ENCODE measurements at regions of chr19 and their contacts with region 1.

Region 1: DNA sequence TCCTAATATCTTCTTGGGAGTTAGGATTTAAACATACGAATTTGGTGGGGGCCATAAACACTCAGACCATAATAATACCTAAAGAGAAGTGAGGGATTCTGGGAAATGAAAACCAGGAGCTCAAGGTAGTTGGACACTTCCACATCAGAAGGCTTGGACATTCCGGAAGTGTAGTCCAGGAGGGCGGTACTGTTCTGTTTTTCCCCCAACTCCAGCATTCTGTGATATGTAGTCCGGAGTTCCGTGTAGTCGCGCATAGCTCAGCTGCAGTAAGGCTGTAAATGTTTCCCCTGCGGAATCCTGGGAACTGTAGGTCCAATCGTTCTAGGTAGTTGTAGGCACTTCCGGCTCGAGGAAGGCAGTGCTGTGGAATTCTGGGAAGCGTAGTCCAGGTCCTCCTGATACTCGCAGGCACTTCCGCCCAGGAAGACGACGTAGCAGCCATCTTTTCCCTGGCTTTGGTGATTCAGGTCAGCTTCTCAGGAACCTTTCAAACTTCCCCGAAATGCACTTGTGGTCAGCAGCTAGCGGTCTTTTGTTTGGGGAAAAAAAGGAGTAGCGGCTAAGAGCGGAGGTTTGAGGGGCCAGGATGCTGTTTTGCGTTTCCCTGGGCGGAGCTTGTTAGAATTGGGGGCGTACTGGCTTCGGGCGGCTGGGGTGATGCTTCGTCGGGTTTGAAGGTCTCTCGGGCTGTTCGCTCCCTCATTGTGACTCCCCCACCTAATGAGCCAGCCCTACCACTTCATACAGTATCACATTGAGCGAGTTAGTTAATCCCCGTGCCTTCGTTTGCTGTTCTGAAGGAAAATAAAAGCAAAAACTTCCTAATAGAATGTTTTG is at the start of gene ZNF226:
- DNase-seq: peak; percentile 89
- ATAC-seq: peak; percentile 95
- H3K4me3 ChIP-seq: peak within 1 kb of the TSS; percentile 72 to 99 (median 88)
- H3K4me3 Mint-ChIP-seq: peak within 1 kb of the TSS; percentile 98
- H3K27ac ChIP-seq: peak within 1 kb of the TSS; percentile 73 to 83
- H3K27ac Mint-ChIP-seq: peak within 1 kb of the TSS; percentile 98
- H3K4me1 ChIP-seq: peaks cover 11 to 16% of the 10 kb centered on the region in 2 donors
- H3K4me1 Mint-ChIP-seq: peaks cover 31% of the 10 kb centered on the region
- H3K27me3 ChIP-seq: no peaks in the 10 kb centered on the region
- H3K27me3 Mint-ChIP-seq: no peaks in the 10 kb centered on the region
- CTCF ChIP-seq: no peak
- total RNA-seq, gene ZNF226: 55.8 and 58.8 TPM in 2 replicates

Region 2: DNA sequence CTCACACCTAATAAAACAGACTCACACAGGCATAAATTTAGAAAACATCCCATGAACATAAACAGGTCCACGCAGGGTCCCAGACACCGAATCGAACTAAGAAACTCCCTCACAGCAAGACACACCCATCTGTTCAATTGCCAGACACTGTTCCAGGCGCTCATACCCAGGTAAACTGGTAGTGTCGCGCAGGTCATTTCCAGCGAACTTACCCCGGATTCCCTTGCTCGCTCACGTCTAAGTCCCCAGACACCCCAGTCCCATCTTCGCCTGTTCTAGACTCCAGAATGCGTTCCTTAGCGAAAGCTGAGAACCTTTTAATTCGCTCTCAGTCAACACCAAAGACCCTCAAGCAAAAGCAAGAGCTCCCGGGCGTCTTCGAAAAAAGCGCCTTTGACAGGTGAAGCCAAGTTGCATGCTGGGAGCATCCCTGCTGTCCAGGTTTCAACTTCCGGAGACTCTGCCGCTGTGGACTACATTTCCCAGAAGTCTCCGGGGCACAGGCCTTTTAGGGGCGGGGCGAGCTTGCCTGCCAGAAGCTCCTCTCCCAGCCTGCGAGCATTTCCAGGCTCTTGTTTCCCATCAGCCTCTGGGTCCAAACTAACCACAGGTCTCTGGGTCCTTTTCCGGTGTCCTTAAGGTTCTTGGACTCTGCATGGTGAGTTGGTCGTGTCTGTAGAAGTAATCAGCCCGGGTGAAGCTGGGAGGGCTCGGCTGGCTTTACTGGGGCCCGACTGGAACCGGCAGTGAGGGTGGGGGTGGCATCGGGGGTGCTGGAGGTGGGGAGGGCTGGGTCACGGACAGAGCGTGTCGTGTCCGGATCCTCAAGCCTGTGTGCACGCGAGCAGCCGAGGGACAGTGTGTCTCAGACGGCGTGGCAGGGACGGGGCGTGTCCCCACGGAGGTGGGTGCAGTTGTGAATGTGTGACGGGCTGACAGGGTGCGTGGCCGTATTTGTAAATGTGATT is 337.8 kb before region 1 on chr19 and contains the start of gene ZNF283:
- CTCF ChIA-PET with region 1: no interaction called
- POLR2A ChIA-PET with region 1: no interaction called
- intact Hi-C with region 1: loop called (anchors 5 kb)
- DNase-seq: peak; percentile 86
- ATAC-seq: peak; percentile 99
- H3K4me3 ChIP-seq: peak within 1 kb of the TSS; percentile 56 to 88 (median 69)
- H3K4me3 Mint-ChIP-seq: peak within 1 kb of the TSS; percentile 92
- H3K27ac ChIP-seq: peak within 1 kb of the TSS in 1 of 2 donors; percentile 23
- H3K27ac Mint-ChIP-seq: peak within 1 kb of the TSS; percentile 50
- H3K4me1 ChIP-seq: peaks cover 9 to 12% of the 10 kb centered on the region in 2 donors
- H3K4me1 Mint-ChIP-seq: peaks cover 17% of the 10 kb centered on the region
- H3K27me3 ChIP-seq: peaks cover 0 to under 1% (median 0%) of the 10 kb centered on the region in 4 experiments
- H3K27me3 Mint-ChIP-seq: peaks cover 11% of the 10 kb centered on the region
- CTCF ChIP-seq: no peak
- total RNA-seq, gene ZNF283: 20.8 and 23.3 TPM in 2 replicates

Region 3: DNA sequence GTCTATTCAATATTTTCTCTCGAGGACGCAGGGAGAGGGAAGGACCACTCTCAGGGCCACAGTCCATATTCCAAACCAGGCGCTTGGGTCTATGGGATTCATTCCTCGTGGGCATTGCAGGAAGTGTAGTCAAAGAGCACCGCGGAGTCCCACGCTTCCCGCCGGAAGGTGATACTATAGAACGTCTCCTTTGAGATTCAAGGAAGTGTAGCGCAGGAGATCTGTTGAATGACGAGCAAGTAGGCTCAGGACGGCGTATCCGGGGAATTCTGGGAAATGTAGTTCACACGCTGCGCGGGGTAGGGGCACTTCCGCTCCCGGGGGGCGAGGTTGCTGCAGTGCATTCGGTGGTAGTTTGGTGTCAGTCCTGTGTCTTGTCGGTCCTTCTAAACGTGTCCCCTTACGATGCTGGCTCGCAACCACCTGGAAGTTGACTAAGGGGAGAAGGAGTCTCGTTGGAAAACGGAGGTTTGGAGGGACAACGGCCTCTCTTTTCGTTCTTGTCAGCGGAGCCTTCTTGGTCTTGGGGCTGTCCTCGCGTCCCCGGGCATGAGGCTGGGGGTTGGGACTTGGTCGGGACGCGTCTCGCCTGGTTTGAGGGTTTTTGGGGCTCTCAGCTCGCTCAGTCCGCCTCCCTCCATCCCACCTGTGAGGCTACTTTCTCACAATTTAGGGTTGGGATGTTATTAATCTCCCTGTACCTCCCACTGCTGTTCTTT is 92.9 kb before region 1 on chr19 and contains the start of gene ZNF284:
- CTCF ChIA-PET with region 1: no interaction called
- POLR2A ChIA-PET with region 1: no interaction called
- intact Hi-C with region 1: loop called (anchors 1 kb)
- DNase-seq: peak; percentile 89
- ATAC-seq: peak; percentile 100
- H3K4me3 ChIP-seq: peak within 1 kb of the TSS; percentile 68 to 89 (median 76)
- H3K4me3 Mint-ChIP-seq: peak within 1 kb of the TSS; percentile 89
- H3K27ac ChIP-seq: peak within 1 kb of the TSS; percentile 32 to 47
- H3K27ac Mint-ChIP-seq: peak within 1 kb of the TSS; percentile 76
- H3K4me1 ChIP-seq: peaks cover 13 to 16% of the 10 kb centered on the region in 2 donors
- H3K4me1 Mint-ChIP-seq: peaks cover 25% of the 10 kb centered on the region
- H3K27me3 ChIP-seq: no peaks in the 10 kb centered on the region
- H3K27me3 Mint-ChIP-seq: no peaks in the 10 kb centered on the region
- CTCF ChIP-seq: no peak
- total RNA-seq, gene ZNF284: 3.3 and 4.9 TPM in 2 replicates

Region 4: GRCh38 chr19:44113138-44113783 is 51.6 kb before region 1 on chr19 and contains the start of gene ZNF225:
- CTCF ChIA-PET with region 1: no interaction called
- POLR2A ChIA-PET with region 1: no interaction called
- intact Hi-C with region 1: loop called (anchors 1 kb)
- DNase-seq: peak; percentile 91
- ATAC-seq: peak; percentile 95
- H3K4me3 ChIP-seq: peak within 1 kb of the TSS; percentile 71 to 98 (median 86)
- H3K4me3 Mint-ChIP-seq: peak within 1 kb of the TSS; percentile 99
- H3K27ac ChIP-seq: peak within 1 kb of the TSS; percentile 45 to 65
- H3K27ac Mint-ChIP-seq: peak within 1 kb of the TSS; percentile 90
- H3K4me1 ChIP-seq: peaks cover 9 to 19% of the 10 kb centered on the region in 2 donors
- H3K4me1 Mint-ChIP-seq: peaks cover 28% of the 10 kb centered on the region
- H3K27me3 ChIP-seq: no peaks in the 10 kb centered on the region
- H3K27me3 Mint-ChIP-seq: no peaks in the 10 kb centered on the region
- CTCF ChIP-seq: no peak
- total RNA-seq, gene ZNF225: 12.1 and 13.1 TPM in 2 replicates

Region 5: GRCh38 chr19:44207126-44207803 is 42.4 kb after region 1 on chr19:
- CTCF ChIA-PET with region 1: interaction called, 3 read pairs
- POLR2A ChIA-PET with region 1: no interaction called
- intact Hi-C with region 1: loop called (anchors 1 kb)
- DNase-seq: peak; percentile 91
- ATAC-seq: peak; percentile 91
- H3K4me3 ChIP-seq: peak overlapping the region; percentile 70 to 93 (median 88)
- H3K4me3 Mint-ChIP-seq: peak overlapping the region; percentile 88
- H3K27ac ChIP-seq: peak overlapping the region; percentile 71 to 86
- H3K27ac Mint-ChIP-seq: peak overlapping the region; percentile 92
- H3K4me1 ChIP-seq: peaks cover 4 to 7% of the 10 kb centered on the region in 2 donors
- H3K4me1 Mint-ChIP-seq: peaks cover 11% of the 10 kb centered on the region
- H3K27me3 ChIP-seq: no peaks in the 10 kb centered on the region
- H3K27me3 Mint-ChIP-seq: peaks cover 13% of the 10 kb centered on the region
- CTCF ChIP-seq: no peak

Region 6: DNA sequence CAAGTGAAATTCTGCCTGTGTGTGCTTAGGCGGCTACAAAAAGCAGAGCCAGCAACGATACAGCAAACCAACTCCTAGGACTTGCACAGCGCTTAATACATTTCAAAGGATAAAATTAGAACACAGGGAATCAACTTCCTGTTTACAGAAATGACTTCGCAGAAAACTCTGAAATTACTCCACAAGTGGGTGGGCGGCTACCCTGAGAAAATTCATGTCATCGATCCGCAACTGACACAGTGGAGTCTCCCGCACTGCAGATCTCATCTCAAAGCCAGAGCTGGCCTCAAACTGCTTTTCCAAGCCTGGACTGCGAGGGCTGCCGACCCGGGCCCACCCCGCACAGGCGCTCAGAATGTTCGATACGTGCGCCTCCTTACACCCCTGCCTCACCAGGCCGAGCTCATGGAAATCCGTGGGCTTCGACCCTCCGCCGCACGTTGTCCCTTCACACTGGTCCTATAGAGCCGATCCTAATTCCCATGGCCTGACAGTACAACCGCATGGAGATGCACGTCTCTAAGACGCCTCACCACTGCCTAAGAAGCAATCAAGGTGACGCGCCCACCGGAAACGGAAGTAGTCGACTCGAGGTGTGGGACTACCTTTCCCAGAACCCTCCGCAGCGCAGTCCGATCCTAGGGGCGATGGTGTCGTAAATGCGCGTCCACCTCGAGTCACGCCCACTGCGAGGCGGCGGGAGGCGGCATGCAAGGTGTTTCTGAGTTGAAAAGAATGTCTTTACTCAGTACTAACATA is 283.2 kb after region 1 on chr19 and contains the start of gene ZNF229:
- CTCF ChIA-PET with region 1: no interaction called
- POLR2A ChIA-PET with region 1: no interaction called
- intact Hi-C with region 1: loop called (anchors 2 kb)
- DNase-seq: peak; percentile 88
- ATAC-seq: peak; percentile 99
- H3K4me3 ChIP-seq: peak within 1 kb of the TSS; percentile 24 to 69 (median 68)
- H3K4me3 Mint-ChIP-seq: peak within 1 kb of the TSS; percentile 94
- H3K27ac ChIP-seq: no peak within 1 kb of the TSS
- H3K27ac Mint-ChIP-seq: peak within 1 kb of the TSS; percentile 71
- H3K4me1 ChIP-seq: peaks cover 8 to 9% of the 10 kb centered on the region in 2 donors
- H3K4me1 Mint-ChIP-seq: peaks cover 15% of the 10 kb centered on the region
- H3K27me3 ChIP-seq: peaks cover 0 to 13% (median 1%) of the 10 kb centered on the region in 4 experiments
- H3K27me3 Mint-ChIP-seq: peaks cover 19% of the 10 kb centered on the region
- CTCF ChIP-seq: no peak
- total RNA-seq, gene ZNF229: 6.2 and 6.7 TPM in 2 replicates